B cell (primary cell): ENCODE measurements at regions of chr14 and their contacts with region 1.

Region 1: DNA sequence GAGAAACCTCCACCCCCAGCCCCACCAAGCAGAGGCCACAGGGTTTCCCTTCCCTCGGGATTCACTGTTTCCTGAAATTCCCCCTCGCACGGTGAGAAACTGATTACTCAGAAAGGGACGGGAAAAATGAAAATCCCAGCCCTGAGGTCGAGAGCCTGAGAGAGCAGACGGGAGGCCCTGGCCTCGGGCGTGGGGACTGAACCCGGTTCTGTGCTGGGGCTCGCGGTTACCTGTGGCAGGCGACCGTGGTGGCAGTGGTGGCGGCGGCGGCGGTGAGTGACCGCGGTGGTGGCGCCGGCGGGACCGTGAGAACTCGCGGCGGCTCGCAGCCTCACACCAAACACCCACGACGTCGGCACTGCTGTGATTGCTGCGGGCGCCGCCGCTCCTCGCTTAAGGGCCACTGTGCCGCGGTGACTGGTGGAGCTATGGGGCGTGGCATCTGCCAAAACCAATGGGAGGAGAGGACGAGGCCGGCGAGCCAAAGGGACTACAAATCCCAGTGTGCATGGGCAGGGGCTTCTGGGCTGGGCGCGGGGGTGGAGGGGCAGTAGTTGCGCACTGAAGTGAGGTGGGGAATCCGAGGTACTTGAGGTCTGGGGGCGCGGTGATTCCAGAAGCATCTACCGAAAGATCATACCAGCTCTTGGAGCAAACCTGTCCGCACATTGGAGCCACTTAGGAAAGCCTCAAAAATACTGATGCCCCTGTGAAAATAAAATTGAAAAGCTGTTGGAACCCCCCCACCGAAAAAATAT is at the start of gene LGMN:
- DNase-seq: peak; percentile 92
- ATAC-seq: peak; percentile 96
- H3K4me3 ChIP-seq: peak within 1 kb of the TSS; percentile 51 to 88 (median 83)
- H3K4me3 Mint-ChIP-seq: peak within 1 kb of the TSS; percentile 89
- H3K27ac ChIP-seq: peak within 1 kb of the TSS; percentile 72 to 84
- H3K27ac Mint-ChIP-seq: peak within 1 kb of the TSS; percentile 89
- H3K4me1 ChIP-seq: peaks cover 25 to 55% of the 10 kb centered on the region in 2 donors
- H3K4me1 Mint-ChIP-seq: peaks cover 77% of the 10 kb centered on the region
- H3K27me3 ChIP-seq: no peaks in the 10 kb centered on the region
- H3K27me3 Mint-ChIP-seq: no peaks in the 10 kb centered on the region
- CTCF ChIP-seq: no peak
- total RNA-seq, gene LGMN: 17.6 and 23.7 TPM in 2 replicates

Region 2: GRCh38 chr14:92704036-92704804 is 44.2 kb before region 1 on chr14:
- CTCF ChIA-PET with region 1: no interaction called
- POLR2A ChIA-PET with region 1: no interaction called
- intact Hi-C with region 1: loop called (anchors 1 kb)
- DNase-seq: peak; percentile 88
- ATAC-seq: peak; percentile 98
- H3K4me3 ChIP-seq: peak overlapping the region in 2 of 5 experiments; percentile 17 to 22
- H3K4me3 Mint-ChIP-seq: peak overlapping the region; percentile 78
- H3K27ac ChIP-seq: peak overlapping the region; percentile 71 to 91
- H3K27ac Mint-ChIP-seq: peak overlapping the region; percentile 86
- H3K4me1 ChIP-seq: peaks cover 40 to 50% of the 10 kb centered on the region in 2 donors
- H3K4me1 Mint-ChIP-seq: peaks cover 56% of the 10 kb centered on the region
- H3K27me3 ChIP-seq: no peaks in the 10 kb centered on the region
- H3K27me3 Mint-ChIP-seq: no peaks in the 10 kb centered on the region
- CTCF ChIP-seq: no peak

Region 3: DNA sequence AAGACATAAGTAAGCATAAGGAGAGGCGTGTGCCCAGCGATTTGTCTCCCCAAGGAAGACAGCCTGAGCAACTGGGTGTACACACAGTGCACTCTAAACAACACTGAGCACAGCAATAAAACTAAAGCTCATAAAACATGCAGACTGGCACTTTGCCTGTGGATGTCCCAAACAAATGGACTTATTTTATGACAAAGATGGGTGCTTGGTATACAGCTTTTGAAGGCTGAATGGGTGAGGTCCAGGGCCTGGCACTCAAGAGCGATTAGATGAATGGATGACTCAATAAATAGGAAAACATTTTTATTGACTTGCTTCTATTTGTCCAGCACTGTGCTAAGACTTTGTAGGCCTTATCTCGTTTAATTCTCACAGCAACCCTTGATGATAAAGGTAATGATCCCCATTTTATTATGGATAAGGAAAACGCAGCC is 28.5 kb before region 1 on chr14:
- CTCF ChIA-PET with region 1: interaction called, 14 read pairs
- POLR2A ChIA-PET with region 1: interaction called, 3 read pairs
- intact Hi-C with region 1: no loop called
- DNase-seq: no peak
- ATAC-seq: no peak
- H3K4me3 ChIP-seq: no peak overlapping the region
- H3K4me3 Mint-ChIP-seq: no peak overlapping the region
- H3K27ac ChIP-seq: no peak overlapping the region
- H3K27ac Mint-ChIP-seq: no peak overlapping the region
- H3K4me1 ChIP-seq: no peaks in the 10 kb centered on the region
- H3K4me1 Mint-ChIP-seq: peaks cover 7% of the 10 kb centered on the region
- H3K27me3 ChIP-seq: no peaks in the 10 kb centered on the region
- H3K27me3 Mint-ChIP-seq: no peaks in the 10 kb centered on the region
- CTCF ChIP-seq: no peak

Region 4: DNA sequence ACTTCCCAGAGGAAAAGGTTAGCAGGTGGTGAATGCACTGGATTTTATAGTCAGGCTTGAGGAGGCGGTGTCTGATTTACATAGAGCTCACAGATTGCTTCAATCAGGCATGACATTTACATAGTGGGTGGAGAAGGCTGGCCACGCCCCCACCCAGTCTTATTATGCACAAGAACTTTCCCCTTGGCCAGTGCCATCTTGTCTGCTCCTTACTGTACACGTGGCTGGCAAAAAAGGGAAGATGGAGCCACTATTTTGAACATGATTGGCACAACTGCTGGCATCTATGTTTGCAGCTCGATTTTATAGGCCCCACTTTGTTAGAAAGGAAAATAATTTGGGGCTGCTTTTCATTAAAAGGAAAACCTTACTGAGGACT is 10.9 kb after region 1 on chr14:
- CTCF ChIA-PET with region 1: interaction called, 4 read pairs
- POLR2A ChIA-PET with region 1: interaction called, 4 read pairs
- intact Hi-C with region 1: loop called (anchors 2 kb)
- DNase-seq: no peak
- ATAC-seq: no peak
- H3K4me3 ChIP-seq: no peak overlapping the region
- H3K4me3 Mint-ChIP-seq: no peak overlapping the region
- H3K27ac ChIP-seq: no peak overlapping the region
- H3K27ac Mint-ChIP-seq: no peak overlapping the region
- H3K4me1 ChIP-seq: peaks cover 3% of the 10 kb centered on the region in 2 donors
- H3K4me1 Mint-ChIP-seq: peaks cover 18% of the 10 kb centered on the region
- H3K27me3 ChIP-seq: no peaks in the 10 kb centered on the region
- H3K27me3 Mint-ChIP-seq: no peaks in the 10 kb centered on the region
- CTCF ChIP-seq: no peak

Region 5: GRCh38 chr14:92768795-92769194 is 20.4 kb after region 1 on chr14:
- CTCF ChIA-PET with region 1: interaction called, 10 read pairs
- POLR2A ChIA-PET with region 1: interaction called, 4 read pairs
- intact Hi-C with region 1: loop called (anchors 2 kb)
- DNase-seq: no peak
- ATAC-seq: no peak
- H3K4me3 ChIP-seq: no peak overlapping the region
- H3K4me3 Mint-ChIP-seq: peak overlapping the region; percentile 70
- H3K27ac ChIP-seq: peak overlapping the region; percentile 71 to 79
- H3K27ac Mint-ChIP-seq: peak overlapping the region; percentile 89
- H3K4me1 ChIP-seq: peaks cover 32 to 42% of the 10 kb centered on the region in 2 donors
- H3K4me1 Mint-ChIP-seq: peaks cover 46% of the 10 kb centered on the region
- H3K27me3 ChIP-seq: no peaks in the 10 kb centered on the region
- H3K27me3 Mint-ChIP-seq: no peaks in the 10 kb centered on the region
- CTCF ChIP-seq: no peak

Region 6: GRCh38 chr14:92783816-92784431 is 35.5 kb after region 1 on chr14:
- CTCF ChIA-PET with region 1: interaction called, 16 read pairs
- POLR2A ChIA-PET with region 1: interaction called, 7 read pairs
- intact Hi-C with region 1: loop called (anchors 5 kb)
- DNase-seq: peak; percentile 80
- ATAC-seq: peak; percentile 77
- H3K4me3 ChIP-seq: no peak overlapping the region
- H3K4me3 Mint-ChIP-seq: no peak overlapping the region
- H3K27ac ChIP-seq: no peak overlapping the region
- H3K27ac Mint-ChIP-seq: no peak overlapping the region
- H3K4me1 ChIP-seq: peaks cover 3 to 6% of the 10 kb centered on the region in 2 donors
- H3K4me1 Mint-ChIP-seq: peaks cover 15% of the 10 kb centered on the region
- H3K27me3 ChIP-seq: no peaks in the 10 kb centered on the region
- H3K27me3 Mint-ChIP-seq: no peaks in the 10 kb centered on the region
- CTCF ChIP-seq: peak; percentile 83

Region 7: DNA sequence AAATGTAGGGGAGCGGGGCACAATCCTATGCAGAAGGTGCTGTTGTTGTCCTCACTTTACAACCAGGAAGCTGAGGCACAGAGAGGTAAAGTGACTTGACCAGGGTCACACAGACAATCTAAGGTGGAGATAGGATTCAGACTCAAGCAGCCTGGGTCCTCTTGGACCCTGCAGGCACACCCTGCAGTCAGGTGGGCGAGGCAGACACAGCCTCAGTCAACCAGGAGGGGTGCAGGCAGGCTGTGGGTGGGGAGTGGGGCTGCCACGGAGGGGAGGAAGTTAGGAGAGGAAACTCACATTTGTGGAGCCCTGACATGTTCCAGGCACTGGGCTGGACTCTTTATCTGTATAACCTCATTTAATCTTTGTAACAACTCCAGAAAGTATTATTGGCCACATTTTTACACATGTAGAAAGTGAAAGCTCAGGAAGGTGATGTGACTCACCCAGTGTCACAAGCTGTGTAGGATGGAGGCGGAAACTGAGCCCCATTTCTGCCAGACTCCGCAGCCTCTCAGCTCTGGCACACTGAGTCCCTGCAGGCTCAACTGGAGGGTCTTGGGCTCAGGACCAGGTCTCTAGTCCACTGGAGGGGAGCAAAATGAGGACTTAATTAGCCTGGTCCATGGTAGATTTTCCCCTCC is 149.6 kb after region 1 on chr14:
- CTCF ChIA-PET with region 1: no interaction called
- POLR2A ChIA-PET with region 1: no interaction called
- intact Hi-C with region 1: no loop called
- DNase-seq: no peak
- ATAC-seq: no peak
- H3K4me3 ChIP-seq: no peak overlapping the region
- H3K4me3 Mint-ChIP-seq: no peak overlapping the region
- H3K27ac ChIP-seq: no peak overlapping the region
- H3K27ac Mint-ChIP-seq: no peak overlapping the region
- H3K4me1 ChIP-seq: no peaks in the 10 kb centered on the region
- H3K4me1 Mint-ChIP-seq: no peaks in the 10 kb centered on the region
- H3K27me3 ChIP-seq: peaks cover 0 to 26% (median 6%) of the 10 kb centered on the region in 4 experiments
- H3K27me3 Mint-ChIP-seq: peaks cover 49% of the 10 kb centered on the region
- CTCF ChIP-seq: no peak